ENCODE measurements at regions of chr16 and their contacts with region 1.

Region 1: DNA sequence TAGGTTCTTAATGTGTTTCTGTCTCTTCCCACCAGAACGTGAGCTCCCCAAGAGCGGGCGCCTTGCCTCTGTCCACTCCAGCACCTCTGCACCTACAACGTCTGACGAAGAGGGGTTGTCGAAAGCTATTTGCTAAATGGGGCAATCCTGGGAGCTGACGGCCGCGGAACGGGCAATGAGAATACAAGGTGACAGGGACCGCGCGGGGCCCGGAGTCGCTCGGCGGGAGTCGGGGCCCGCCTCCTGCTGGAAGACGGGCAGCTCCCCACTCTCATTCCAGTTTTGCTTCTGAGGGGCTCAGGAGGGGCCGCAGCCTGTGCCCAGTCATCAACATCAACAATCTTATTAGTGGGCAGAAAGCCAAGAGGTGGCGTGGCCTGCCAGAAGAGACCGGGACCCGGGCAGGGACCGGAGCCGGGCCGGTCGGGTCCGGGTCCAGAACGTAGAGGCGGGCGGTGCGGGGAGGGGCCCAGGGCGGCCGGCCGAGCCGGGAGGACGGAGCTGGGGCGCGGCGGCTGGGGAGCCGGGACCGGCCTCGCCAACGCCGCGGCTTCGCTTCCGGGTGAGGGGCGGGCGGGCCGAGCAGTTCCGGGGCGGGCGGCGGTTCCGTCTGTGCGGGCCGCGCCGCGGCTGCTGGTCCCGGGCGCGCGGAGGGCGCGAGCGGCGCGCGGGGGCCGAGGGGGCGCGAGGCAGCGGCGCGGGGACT is at the start of gene MOSMO:
- DNase-seq: peak; percentile 54 to 89 (median 72)
- ATAC-seq: peak; percentile 91 to 95 (median 93)
- H3K4me3 ChIP-seq: peak within 1 kb of the TSS; percentile 89 to 99 (median 94)
- H3K27ac ChIP-seq: peak within 1 kb of the TSS; percentile 42 to 69 (median 63)
- H3K4me1 ChIP-seq: peaks cover 0 to 3% (median 0%) of the 10 kb centered on the region in 3 donors
- H3K27me3 ChIP-seq: no peaks in the 10 kb centered on the region
- CTCF ChIP-seq: no peak
- total RNA-seq, gene MOSMO: 3.7 to 7.8 (median 4.8) TPM

Region 2: GRCh38 chr16:22055878-22056277 is 48.2 kb after region 1 on chr16:
- intact Hi-C with region 1: no loop called
- DNase-seq: no peak
- ATAC-seq: no peak
- H3K4me3 ChIP-seq: no peak overlapping the region
- H3K27ac ChIP-seq: no peak overlapping the region
- H3K4me1 ChIP-seq: no peaks in the 10 kb centered on the region
- H3K27me3 ChIP-seq: no peaks in the 10 kb centered on the region
- CTCF ChIP-seq: no peak

Region 3: GRCh38 chr16:22077700-22078313 is 70.1 kb after region 1 on chr16:
- intact Hi-C with region 1: loop called in 2 of 3 experiments (anchors 5 to 10 kb)
- DNase-seq: peak in 5 of 6 donors; percentile 22 to 76 (median 48)
- ATAC-seq: peak in 3 of 4 donors; percentile 80 to 82 (median 81)
- H3K4me3 ChIP-seq: no peak overlapping the region
- H3K27ac ChIP-seq: no peak overlapping the region
- H3K4me1 ChIP-seq: peaks cover 0 to 7% (median 0%) of the 10 kb centered on the region in 3 donors
- H3K27me3 ChIP-seq: no peaks in the 10 kb centered on the region
- CTCF ChIP-seq: peak; percentile 44 to 80 (median 71)

Region 4: GRCh38 chr16:22091758-22092600 is 84.3 kb after region 1 on chr16 and contains the start of gene VWA3A:
- intact Hi-C with region 1: loop called in 1 of 3 experiments (anchors 5 kb)
- DNase-seq: peak in 3 of 6 donors; percentile 16 to 39 (median 28)
- ATAC-seq: peak; percentile 72 to 85 (median 84)
- H3K4me3 ChIP-seq: no peak within 1 kb of the TSS
- H3K27ac ChIP-seq: no peak within 1 kb of the TSS
- H3K4me1 ChIP-seq: no peaks in the 10 kb centered on the region
- H3K27me3 ChIP-seq: no peaks in the 10 kb centered on the region
- CTCF ChIP-seq: no peak
- total RNA-seq, gene VWA3A: 0.06 to 0.24 (median 0.09) TPM in 3 of 6 donors, not detected in the others

Region 5: GRCh38 chr16:22240023-22240710 is 232.5 kb after region 1 on chr16:
- intact Hi-C with region 1: no loop called
- DNase-seq: no peak
- ATAC-seq: peak in 3 of 4 donors; percentile 13 to 39 (median 34)
- H3K4me3 ChIP-seq: no peak overlapping the region
- H3K27ac ChIP-seq: no peak overlapping the region
- H3K4me1 ChIP-seq: peaks cover 0 to 3% (median 0%) of the 10 kb centered on the region in 3 donors
- H3K27me3 ChIP-seq: no peaks in the 10 kb centered on the region
- CTCF ChIP-seq: no peak

Region 6: DNA sequence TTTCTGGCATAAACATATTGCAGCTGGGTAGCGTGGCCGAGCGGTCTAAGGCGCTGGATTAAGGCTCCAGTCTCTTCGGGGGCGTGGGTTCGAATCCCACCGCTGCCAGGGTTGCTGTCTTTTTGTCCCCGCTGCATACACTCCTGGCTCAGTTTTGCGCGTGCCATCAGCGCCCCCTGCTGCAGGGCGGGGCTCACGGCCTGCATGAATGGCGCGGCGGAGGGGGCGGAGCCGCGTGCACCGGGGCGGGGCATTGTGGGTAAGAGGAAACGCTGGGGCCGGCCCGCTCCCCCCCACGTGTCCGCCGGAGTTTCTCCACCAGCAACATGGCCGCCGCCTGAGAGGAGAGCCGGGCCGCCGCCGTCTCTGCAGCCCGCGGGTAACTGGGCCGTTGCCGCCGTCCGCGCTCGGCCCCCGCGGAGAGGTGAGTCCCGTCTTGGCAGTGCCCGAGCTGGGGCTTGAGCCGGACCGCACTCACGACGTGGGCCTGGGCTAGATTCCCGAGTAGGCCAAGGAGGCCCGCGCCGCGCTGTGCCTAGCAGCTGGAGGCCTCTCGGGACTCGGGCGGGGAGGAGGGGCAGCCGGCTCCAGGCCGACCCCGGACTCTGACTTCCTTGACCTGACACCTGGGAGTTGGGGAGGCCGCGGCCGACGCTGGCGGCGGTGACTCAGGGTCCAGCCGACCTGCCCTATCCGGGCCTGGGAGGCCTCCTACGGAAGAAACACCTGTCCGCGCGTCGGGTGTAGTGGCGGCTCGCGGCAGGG is 289.6 kb after region 1 on chr16 and contains the start of gene POLR3E:
- intact Hi-C with region 1: loop called in 1 of 3 experiments (anchors 10 kb)
- DNase-seq: peak; percentile 97 to 100 (median 100)
- ATAC-seq: peak; percentile 89 to 96 (median 92)
- H3K4me3 ChIP-seq: peak within 1 kb of the TSS; percentile 70 to 98 (median 96)
- H3K27ac ChIP-seq: peak within 1 kb of the TSS; percentile 95 to 98 (median 96)
- H3K4me1 ChIP-seq: peaks cover 4 to 14% (median 9%) of the 10 kb centered on the region in 3 donors
- H3K27me3 ChIP-seq: peaks cover 0 to 2% (median 0%) of the 10 kb centered on the region in 4 donors
- CTCF ChIP-seq: peak; percentile 80 to 90 (median 88)
- total RNA-seq, gene POLR3E: 26.3 to 38.3 (median 31.9) TPM

Measured in pancreas (tissue), 10 donors.